ENCODE measurements at regions of chr19 and their contacts with region 1.

Region 1: DNA sequence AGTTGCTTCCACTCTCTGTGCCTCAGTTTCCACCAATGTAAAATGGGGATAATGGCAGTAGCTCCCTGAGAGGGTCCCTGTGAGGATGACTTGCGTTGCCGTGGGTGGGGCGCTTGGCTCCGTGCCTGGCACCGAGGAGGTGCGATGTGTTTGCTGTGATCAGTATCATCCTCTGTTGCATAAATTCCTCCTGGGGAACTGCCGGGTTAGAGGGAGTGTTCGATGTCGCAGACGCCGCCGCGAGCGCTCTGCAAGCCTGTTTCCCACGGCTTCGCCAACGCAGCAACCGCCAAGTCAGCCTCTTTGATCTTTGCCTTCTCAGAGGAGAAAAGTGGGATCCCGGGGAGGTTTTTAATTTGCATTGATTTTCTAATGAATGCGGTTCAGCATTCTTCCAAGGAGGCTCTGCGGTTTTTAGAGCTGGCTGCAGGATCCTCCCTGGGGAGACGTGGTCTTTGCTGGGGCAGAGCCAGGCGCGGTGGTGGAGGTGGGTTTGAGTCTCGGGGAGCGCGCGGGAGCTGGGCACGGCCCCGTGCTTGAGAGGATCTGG is 7.6 kb downstream of the GPR32 start:
- DNase-seq: no peak
- ATAC-seq: no peak; the same call in 1 of the 2 replicates
- H3K4me3 ChIP-seq: peak overlapping the region; percentile 4; the same call in 1 of the 2 replicates
- H3K27ac ChIP-seq: no peak overlapping the region
- H3K4me1 ChIP-seq: no peaks in the 10 kb centered on the region
- H3K27me3 ChIP-seq: peaks cover 71% of the 10 kb centered on the region
- CTCF ChIP-seq: no peak

Region 2: DNA sequence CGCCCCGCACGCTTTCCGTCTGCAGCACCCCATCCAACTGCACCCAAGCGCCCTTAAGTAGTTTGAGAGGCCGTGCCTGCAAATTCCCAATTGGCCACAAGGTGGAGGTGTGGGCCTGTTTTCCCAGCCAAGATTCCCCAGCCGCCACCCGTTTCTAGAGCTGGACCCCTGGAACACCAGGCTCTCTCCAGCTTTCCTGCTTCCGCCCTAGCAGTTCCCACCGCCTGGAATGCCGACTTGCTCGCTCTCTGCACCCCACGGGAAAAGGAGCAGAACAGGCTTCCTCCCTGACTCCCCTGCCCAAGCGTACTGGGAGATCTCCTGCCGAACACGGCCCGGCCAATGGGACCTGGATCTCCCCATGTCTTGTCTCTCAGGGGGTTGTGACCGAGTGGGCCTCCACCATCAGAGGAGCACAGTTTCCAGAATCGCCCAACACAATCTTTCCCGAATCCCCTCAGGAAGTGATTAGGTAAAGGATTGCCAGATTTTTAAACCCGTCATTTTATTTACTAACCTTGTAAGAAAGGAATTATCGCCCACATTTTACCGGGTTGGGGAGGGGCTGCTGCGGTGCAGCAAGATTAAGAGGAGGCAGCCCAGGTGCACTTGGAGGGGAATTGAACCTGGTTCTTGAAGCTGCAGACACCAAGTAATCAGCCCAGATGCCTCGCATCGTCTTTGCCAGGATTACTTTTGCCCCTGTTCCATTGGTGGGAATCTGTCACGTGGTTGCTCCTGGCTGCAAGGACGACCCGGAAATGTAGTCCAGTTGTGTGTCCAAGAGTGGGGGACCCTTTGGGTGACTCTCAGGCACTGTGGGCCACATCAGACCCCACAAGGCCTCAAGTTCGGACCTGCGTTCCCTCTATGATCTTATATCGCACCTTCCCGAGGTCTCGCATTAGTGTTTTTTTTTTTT is 408.9 kb before region 1 on chr19:
- CTCF ChIA-PET with region 1: no interaction called
- POLR2A ChIA-PET with region 1: no interaction called
- intact Hi-C with region 1: loop called (anchors 2 kb)
- DNase-seq: peak; percentile 93
- ATAC-seq: peak; percentile 95
- H3K4me3 ChIP-seq: peak overlapping the region; percentile 86
- H3K27ac ChIP-seq: 0 out of 2 replicates have a peak overlapping the region, but pooled peaks have one; percentile 1
- H3K4me1 ChIP-seq: peaks cover 4% of the 10 kb centered on the region; the same call in 1 of the 2 replicates
- H3K27me3 ChIP-seq: no peaks in the 10 kb centered on the region
- CTCF ChIP-seq: peak; percentile 91

Region 3: DNA sequence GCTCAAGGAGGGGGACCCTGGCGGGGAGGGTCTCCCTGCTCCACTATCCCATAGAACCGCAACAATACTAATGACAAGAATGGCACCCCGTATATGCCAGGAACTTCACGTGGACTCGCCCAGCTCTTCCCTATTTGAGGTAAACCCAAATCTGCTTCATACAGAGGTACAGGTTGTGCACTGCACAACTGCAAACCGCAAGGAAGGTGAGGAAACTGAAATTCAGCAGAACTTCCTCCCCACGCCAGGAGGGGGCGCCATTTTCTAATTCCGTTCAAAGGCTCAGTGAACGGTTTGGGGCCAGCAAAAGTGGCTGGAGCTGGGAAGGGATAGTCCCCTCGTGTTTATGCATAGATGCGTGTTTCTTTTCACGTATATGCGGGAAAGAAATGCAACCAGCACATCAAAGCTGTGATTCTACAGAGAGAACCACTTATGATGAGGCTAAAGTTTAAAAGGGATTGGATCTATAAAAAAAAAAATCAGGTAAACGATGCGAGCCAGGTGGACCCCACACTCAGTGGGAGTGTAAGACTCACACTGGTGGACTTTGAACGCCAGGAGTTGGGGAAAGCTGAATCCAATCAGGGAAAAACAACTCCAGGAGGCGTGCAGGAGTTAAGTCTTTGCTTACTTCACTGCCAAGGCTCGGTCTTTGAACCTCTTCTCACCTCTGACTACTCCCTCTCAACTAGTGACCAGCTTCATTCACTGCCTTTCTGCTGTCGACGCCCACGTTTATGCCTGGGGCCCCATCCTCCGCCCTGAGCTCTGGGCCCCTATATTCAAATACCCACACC is 108.3 kb before region 1 on chr19:
- CTCF ChIA-PET with region 1: no interaction called
- POLR2A ChIA-PET with region 1: interaction called, 30 read pairs
- intact Hi-C with region 1: loop called (anchors 1 kb)
- DNase-seq: peak; percentile 64
- ATAC-seq: peak; percentile 58
- H3K4me3 ChIP-seq: no peak overlapping the region
- H3K27ac ChIP-seq: no peak overlapping the region
- H3K4me1 ChIP-seq: no peaks in the 10 kb centered on the region
- H3K27me3 ChIP-seq: peaks cover 59% of the 10 kb centered on the region
- CTCF ChIP-seq: peak; percentile 97

Region 4: GRCh38 chr19:50724522-50725217 is 53.2 kb before region 1 on chr19:
- CTCF ChIA-PET with region 1: interaction called, 6 read pairs
- POLR2A ChIA-PET with region 1: no interaction called
- intact Hi-C with region 1: loop called (anchors 1 kb)
- DNase-seq: peak; percentile 100
- ATAC-seq: peak; percentile 87
- H3K4me3 ChIP-seq: peak overlapping the region; percentile 75
- H3K27ac ChIP-seq: peak overlapping the region; percentile 8; the same call in 1 of the 2 replicates
- H3K4me1 ChIP-seq: peaks cover 13% of the 10 kb centered on the region
- H3K27me3 ChIP-seq: no peaks in the 10 kb centered on the region
- CTCF ChIP-seq: peak; percentile 93